ENCODE measurements at regions of chr2 and their contacts with region 1.

Region 1: GRCh38 chr2:156892467-156893281 is 364.8 kb upstream of the GALNT5 start:
- DNase-seq: peak; percentile 83
- ATAC-seq: peak; percentile 88
- H3K4me3 ChIP-seq: peak overlapping the region; percentile 76
- H3K27ac ChIP-seq: peak overlapping the region; percentile 28
- H3K4me1 ChIP-seq: peaks cover 15% of the 10 kb centered on the region
- H3K27me3 ChIP-seq: no peaks in the 10 kb centered on the region
- CTCF ChIP-seq: peak; percentile 76

Region 2: DNA sequence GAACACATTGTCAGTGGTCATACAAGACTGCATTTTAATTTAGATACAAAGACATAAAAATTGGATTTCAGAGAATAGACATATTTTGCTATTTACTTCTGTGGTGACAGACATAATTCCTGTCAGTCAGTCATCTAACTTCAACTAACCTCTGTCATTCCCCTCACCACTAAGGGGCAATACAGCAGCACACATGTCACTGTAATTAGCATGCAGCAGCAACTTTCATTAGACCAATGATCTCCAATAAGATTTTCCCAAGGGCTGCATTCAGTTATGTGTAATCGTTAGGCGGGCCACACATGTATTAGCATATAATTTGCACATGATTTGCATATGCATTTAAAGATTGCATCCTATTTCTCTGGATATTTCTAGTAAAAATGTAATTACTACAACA is 1184.6 kb before region 1 on chr2:
- CTCF ChIA-PET with region 1: no interaction called
- POLR2A ChIA-PET with region 1: no interaction called
- intact Hi-C with region 1: loop called (anchors 5 kb)
- DNase-seq: peak; percentile 20
- ATAC-seq: peak; percentile 64
- H3K4me3 ChIP-seq: no peak overlapping the region
- H3K27ac ChIP-seq: no peak overlapping the region
- H3K4me1 ChIP-seq: no peaks in the 10 kb centered on the region
- H3K27me3 ChIP-seq: 0 out of 2 replicates have a peak, but pooled peaks cover 4% of the 10 kb centered on the region
- CTCF ChIP-seq: peak; percentile 47; the same call in 1 of the 2 replicates

Region 3: DNA sequence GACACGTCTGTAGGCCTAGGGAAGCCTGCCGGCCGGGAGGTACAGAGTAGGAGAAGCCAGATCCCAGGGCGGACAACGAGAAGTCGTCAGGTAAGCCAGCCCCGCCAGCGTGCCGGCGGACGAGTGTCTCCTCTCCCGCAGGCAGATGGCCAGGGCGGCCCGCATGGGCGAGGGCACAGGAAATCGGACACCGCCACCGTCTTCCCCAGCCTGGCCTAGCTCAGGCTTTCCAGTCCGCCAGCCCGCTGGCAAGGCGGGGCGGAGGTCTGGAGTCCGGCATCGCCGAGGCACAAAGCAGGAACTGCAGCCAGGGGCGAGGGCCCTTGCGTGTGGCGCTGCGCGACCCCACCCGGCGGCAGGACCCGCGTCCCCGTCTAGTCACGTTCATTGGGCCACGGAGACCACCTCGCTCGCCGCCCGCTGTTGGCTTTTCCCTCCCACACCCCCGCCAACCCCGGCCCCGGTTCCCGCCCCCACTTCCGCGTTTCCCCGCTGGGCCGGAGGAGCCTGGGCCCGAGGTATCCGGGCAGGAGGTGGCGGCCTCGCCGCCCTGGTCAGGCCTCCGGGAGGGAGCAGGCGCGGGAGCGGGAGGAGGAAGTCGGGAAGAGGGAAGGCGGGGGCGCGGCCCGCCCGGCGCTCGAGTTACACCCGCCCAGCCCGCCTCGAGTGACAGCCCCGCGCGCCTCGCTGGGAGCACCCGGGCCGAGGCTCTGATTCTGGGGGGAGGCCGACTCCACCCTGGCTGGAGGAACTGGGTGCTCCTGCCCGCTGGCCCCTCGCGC is 456.8 kb before region 1 on chr2 and contains the start of gene GPD2:
- CTCF ChIA-PET with region 1: no interaction called
- POLR2A ChIA-PET with region 1: no interaction called
- intact Hi-C with region 1: loop called (anchors 5 kb)
- DNase-seq: peak; percentile 91
- ATAC-seq: peak; percentile 92
- H3K4me3 ChIP-seq: peak within 1 kb of the TSS; percentile 74
- H3K27ac ChIP-seq: peak within 1 kb of the TSS; percentile 91
- H3K4me1 ChIP-seq: peaks cover 48% of the 10 kb centered on the region
- H3K27me3 ChIP-seq: no peaks in the 10 kb centered on the region
- CTCF ChIP-seq: no peak
- total RNA-seq, gene GPD2: 91.3 and 107 TPM in 2 replicates

Region 4: GRCh38 chr2:156874707-156875106 is 18.0 kb before region 1 on chr2:
- CTCF ChIA-PET with region 1: no interaction called
- POLR2A ChIA-PET with region 1: no interaction called
- intact Hi-C with region 1: no loop called
- DNase-seq: no peak
- ATAC-seq: no peak
- H3K4me3 ChIP-seq: no peak overlapping the region
- H3K27ac ChIP-seq: no peak overlapping the region
- H3K4me1 ChIP-seq: no peaks in the 10 kb centered on the region
- H3K27me3 ChIP-seq: no peaks in the 10 kb centered on the region
- CTCF ChIP-seq: no peak

Region 5: GRCh38 chr2:156918410-156918809 is 25.7 kb after region 1 on chr2:
- CTCF ChIA-PET with region 1: no interaction called
- POLR2A ChIA-PET with region 1: no interaction called
- intact Hi-C with region 1: no loop called
- DNase-seq: no peak
- ATAC-seq: no peak
- H3K4me3 ChIP-seq: no peak overlapping the region
- H3K27ac ChIP-seq: no peak overlapping the region
- H3K4me1 ChIP-seq: no peaks in the 10 kb centered on the region
- H3K27me3 ChIP-seq: no peaks in the 10 kb centered on the region
- CTCF ChIP-seq: no peak

Region 6: DNA sequence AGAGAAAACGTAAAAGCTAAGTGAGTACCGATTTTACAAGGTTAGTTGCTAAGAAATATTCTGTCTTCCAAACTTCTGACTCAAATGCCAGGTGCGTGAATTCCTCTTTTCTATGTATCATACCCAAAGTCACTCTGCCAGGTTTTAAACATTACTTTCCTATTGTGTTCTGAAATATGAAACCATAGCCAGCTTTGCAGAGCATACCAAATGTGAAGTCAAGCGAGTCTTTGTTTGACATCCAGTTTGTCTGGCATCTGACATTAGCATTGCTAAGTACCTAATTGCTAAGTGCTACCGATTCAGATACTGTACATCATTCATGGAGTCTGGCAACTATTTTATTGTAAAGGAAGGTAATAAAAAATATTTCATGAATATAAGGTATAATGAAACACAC is 43.0 kb after region 1 on chr2:
- CTCF ChIA-PET with region 1: no interaction called
- POLR2A ChIA-PET with region 1: no interaction called
- intact Hi-C with region 1: loop called (anchors 2 kb)
- DNase-seq: peak; percentile 98
- ATAC-seq: peak; percentile 95
- H3K4me3 ChIP-seq: no peak overlapping the region; the same call in 1 of the 2 replicates
- H3K27ac ChIP-seq: peak overlapping the region; percentile 60
- H3K4me1 ChIP-seq: peaks cover 37% of the 10 kb centered on the region
- H3K27me3 ChIP-seq: no peaks in the 10 kb centered on the region
- CTCF ChIP-seq: no peak

Region 7: GRCh38 chr2:157055660-157056199 is 163.1 kb after region 1 on chr2:
- CTCF ChIA-PET with region 1: interaction called, 8 read pairs
- POLR2A ChIA-PET with region 1: no interaction called
- intact Hi-C with region 1: loop called (anchors 1 kb)
- DNase-seq: peak; percentile 58
- ATAC-seq: no peak
- H3K4me3 ChIP-seq: no peak overlapping the region
- H3K27ac ChIP-seq: peak overlapping the region; percentile 38
- H3K4me1 ChIP-seq: peaks cover 20% of the 10 kb centered on the region
- H3K27me3 ChIP-seq: no peaks in the 10 kb centered on the region
- CTCF ChIP-seq: peak; percentile 80

Region 8: DNA sequence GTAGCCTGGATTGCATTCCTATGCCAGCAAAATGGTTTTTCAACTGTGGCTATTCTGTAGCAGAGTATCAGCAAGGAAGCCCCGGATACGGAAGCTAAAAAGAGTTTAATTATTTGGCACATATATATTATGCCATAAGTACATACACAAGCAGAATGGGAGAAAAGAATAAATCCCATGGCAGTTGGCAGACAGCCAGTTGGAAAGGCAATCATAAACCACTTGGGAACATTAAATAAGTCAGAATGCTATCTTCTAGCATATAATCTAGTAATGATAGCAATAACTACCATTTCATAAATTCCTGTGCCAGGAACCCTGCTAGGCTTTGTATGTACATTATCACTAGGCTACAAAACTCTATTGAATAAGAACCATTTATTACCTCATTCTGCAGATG is 390.8 kb after region 1 on chr2:
- CTCF ChIA-PET with region 1: no interaction called
- POLR2A ChIA-PET with region 1: no interaction called
- intact Hi-C with region 1: no loop called
- DNase-seq: no peak
- ATAC-seq: no peak
- H3K4me3 ChIP-seq: no peak overlapping the region
- H3K27ac ChIP-seq: no peak overlapping the region
- H3K4me1 ChIP-seq: no peaks in the 10 kb centered on the region
- H3K27me3 ChIP-seq: no peaks in the 10 kb centered on the region
- CTCF ChIP-seq: no peak

Measured in PC-3 (cell line).